Caco-2 (cell line): ENCODE measurements at regions of chr2 and their contacts with region 1.

Region 1: GRCh38 chr2:100884145-100884621 is 64.2 kb downstream of the NPAS2 start:
- DNase-seq: peak; percentile 48 to 73
- H3K4me3 ChIP-seq: no peak overlapping the region
- H3K4me3 Mint-ChIP-seq: no peak overlapping the region
- H3K27ac Mint-ChIP-seq: no peak overlapping the region
- H3K4me1 ChIP-seq: peaks cover 28% of the 10 kb centered on the region
- H3K4me1 Mint-ChIP-seq: peaks cover 25% of the 10 kb centered on the region
- H3K27me3 ChIP-seq: no peaks in the 10 kb centered on the region
- H3K27me3 Mint-ChIP-seq: no peaks in the 10 kb centered on the region
- CTCF ChIP-seq: no peak

Region 2: GRCh38 chr2:100840519-100840918 is 43.7 kb before region 1 on chr2:
- CTCF ChIA-PET with region 1: no interaction called
- POLR2A ChIA-PET with region 1: no interaction called
- intact Hi-C with region 1: loop called (anchors 1 kb)
- DNase-seq: no peak
- H3K4me3 ChIP-seq: no peak overlapping the region
- H3K4me3 Mint-ChIP-seq: no peak overlapping the region
- H3K27ac Mint-ChIP-seq: no peak overlapping the region
- H3K4me1 ChIP-seq: peaks cover 17% of the 10 kb centered on the region
- H3K4me1 Mint-ChIP-seq: peaks cover 6% of the 10 kb centered on the region
- H3K27me3 ChIP-seq: no peaks in the 10 kb centered on the region
- H3K27me3 Mint-ChIP-seq: no peaks in the 10 kb centered on the region
- CTCF ChIP-seq: no peak

Region 3: DNA sequence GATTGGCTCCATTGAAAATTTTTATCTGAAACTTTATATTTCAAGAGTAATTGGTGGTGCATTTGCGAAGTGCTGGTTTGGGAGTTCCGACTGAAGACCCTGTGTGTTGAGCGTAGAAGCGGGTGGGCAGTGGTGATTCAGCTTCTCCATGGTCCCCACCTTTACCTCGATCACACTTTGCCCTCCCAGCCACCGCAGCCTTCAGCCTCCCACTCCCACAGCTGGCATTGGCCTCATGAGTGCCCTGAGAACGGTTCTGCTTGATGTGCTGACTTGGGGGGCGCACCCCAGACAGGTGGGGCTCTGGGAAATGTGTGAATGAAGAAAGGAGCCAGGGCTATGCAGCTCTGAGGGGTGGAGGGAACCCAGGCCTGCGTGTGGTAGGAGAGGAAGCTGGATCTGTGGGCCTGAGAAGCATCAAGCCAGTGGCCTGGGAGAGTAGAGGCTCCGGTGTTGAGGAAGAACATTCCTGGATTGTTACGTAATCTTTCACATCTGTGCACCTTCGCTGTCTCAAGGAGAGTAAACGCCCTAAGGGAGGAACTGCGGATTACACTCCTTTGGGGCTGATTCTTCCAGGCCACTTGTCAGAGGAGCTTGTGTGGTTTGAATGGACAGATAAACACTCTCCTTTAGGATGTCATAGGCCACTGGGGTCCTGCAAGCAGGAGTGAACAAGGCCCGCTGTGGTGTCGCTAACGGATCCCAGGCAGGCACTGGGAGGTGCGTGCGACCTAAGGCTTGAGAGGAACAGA is 19.5 kb after region 1 on chr2:
- CTCF ChIA-PET with region 1: no interaction called
- POLR2A ChIA-PET with region 1: no interaction called
- intact Hi-C with region 1: loop called (anchors 1 kb)
- DNase-seq: peak; percentile 64 to 81
- H3K4me3 ChIP-seq: no peak overlapping the region
- H3K4me3 Mint-ChIP-seq: no peak overlapping the region
- H3K27ac Mint-ChIP-seq: peak overlapping the region; percentile 26
- H3K4me1 ChIP-seq: peaks cover 17% of the 10 kb centered on the region
- H3K4me1 Mint-ChIP-seq: peaks cover 20% of the 10 kb centered on the region
- H3K27me3 ChIP-seq: no peaks in the 10 kb centered on the region
- H3K27me3 Mint-ChIP-seq: no peaks in the 10 kb centered on the region
- CTCF ChIP-seq: no peak

Region 4: DNA sequence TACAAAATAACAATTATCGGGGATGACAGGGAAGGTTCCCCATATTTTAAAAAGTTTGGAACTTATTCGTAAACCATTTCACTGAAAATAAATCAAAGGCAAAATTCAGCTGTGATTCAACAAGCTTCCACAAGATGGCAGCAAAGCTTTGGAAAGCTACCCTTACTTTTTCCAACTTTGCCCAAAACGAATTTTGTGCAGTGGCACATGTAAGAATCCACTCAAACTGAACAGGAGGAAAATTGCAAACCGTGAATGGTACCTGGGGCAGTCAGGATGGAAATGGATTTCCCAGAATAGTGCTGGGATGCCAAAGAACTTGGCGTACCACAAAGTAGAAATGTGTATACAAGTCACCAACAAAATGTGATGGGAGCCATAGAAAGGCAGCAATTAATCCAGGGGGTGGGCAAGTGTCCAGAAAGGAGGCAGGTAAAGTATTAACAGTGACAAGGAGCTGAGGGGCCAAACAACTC is 128.6 kb after region 1 on chr2:
- CTCF ChIA-PET with region 1: no interaction called
- POLR2A ChIA-PET with region 1: no interaction called
- intact Hi-C with region 1: no loop called
- DNase-seq: peak in 1 of 2 experiments; percentile 62
- H3K4me3 ChIP-seq: no peak overlapping the region
- H3K4me3 Mint-ChIP-seq: no peak overlapping the region
- H3K27ac Mint-ChIP-seq: peak overlapping the region; percentile 22
- H3K4me1 ChIP-seq: no peaks in the 10 kb centered on the region
- H3K4me1 Mint-ChIP-seq: peaks cover 11% of the 10 kb centered on the region
- H3K27me3 ChIP-seq: no peaks in the 10 kb centered on the region
- H3K27me3 Mint-ChIP-seq: no peaks in the 10 kb centered on the region
- CTCF ChIP-seq: peak; percentile 67 to 85

Region 5: GRCh38 chr2:101667823-101668222 is 783.6 kb after region 1 on chr2:
- CTCF ChIA-PET with region 1: no interaction called
- POLR2A ChIA-PET with region 1: no interaction called
- intact Hi-C with region 1: no loop called
- DNase-seq: no peak
- H3K4me3 ChIP-seq: no peak overlapping the region
- H3K4me3 Mint-ChIP-seq: no peak overlapping the region
- H3K27ac Mint-ChIP-seq: no peak overlapping the region
- H3K4me1 ChIP-seq: no peaks in the 10 kb centered on the region
- H3K4me1 Mint-ChIP-seq: no peaks in the 10 kb centered on the region
- H3K27me3 ChIP-seq: no peaks in the 10 kb centered on the region
- H3K27me3 Mint-ChIP-seq: no peaks in the 10 kb centered on the region
- CTCF ChIP-seq: no peak